CD4-positive, alpha-beta memory T cell (primary cell): ENCODE measurements at regions of chr5 and their contacts with region 1.

Region 1: DNA sequence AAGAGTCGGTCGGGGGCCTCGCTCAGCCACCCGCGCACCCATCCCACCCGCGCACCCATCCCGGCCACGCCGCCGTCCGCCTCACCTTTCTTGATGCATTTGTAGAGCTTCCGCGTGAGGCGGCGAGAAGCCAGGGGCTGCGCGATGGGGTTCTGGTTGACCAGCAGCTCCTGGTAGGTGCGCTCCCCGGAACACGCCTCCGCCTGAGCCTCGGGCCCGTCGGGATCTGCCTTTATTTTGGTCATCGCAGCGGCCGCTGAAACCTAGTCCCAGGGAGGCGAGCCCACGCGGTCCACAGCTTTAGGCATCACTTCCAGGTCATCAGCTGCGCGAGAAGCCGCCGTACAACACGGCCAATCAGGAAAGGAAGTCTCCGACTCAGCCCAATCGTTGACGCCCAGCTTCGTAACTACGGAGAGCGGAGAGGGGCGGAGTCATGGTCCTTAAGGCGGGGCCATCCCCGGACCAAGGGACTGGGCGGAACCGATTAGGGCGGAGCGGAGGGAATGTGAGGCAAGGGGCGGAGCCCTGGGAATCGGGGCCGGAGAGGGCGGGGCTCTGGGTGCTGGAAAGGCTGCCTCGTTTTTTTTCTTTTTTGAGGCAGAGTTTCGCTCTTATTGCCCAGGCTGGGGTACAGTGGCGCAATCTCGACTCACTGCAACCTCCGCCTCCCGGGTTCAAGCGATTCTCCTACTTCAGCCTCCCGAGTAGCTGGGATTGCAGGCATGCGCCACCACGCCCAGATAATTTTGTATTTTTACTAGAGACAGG is at the start of gene NHP2:
- DNase-seq: peak; percentile 96 to 98 (median 96)
- H3K4me3 ChIP-seq: peak within 1 kb of the TSS; percentile 65
- H3K4me3 Mint-ChIP-seq: peak within 1 kb of the TSS; percentile 92 to 98 (median 96)
- H3K27ac ChIP-seq: peak within 1 kb of the TSS; percentile 70
- H3K27ac Mint-ChIP-seq: peak within 1 kb of the TSS; percentile 87 to 96 (median 90)
- H3K4me1 ChIP-seq: peaks cover 34% of the 10 kb centered on the region
- H3K4me1 Mint-ChIP-seq: peaks cover 21 to 53% (median 30%) of the 10 kb centered on the region in 4 donors
- H3K27me3 ChIP-seq: no peaks in the 10 kb centered on the region
- H3K27me3 Mint-ChIP-seq: no peaks in the 10 kb centered on the region
- total RNA-seq, gene NHP2: 64.1 to 69.5 TPM

Region 2: DNA sequence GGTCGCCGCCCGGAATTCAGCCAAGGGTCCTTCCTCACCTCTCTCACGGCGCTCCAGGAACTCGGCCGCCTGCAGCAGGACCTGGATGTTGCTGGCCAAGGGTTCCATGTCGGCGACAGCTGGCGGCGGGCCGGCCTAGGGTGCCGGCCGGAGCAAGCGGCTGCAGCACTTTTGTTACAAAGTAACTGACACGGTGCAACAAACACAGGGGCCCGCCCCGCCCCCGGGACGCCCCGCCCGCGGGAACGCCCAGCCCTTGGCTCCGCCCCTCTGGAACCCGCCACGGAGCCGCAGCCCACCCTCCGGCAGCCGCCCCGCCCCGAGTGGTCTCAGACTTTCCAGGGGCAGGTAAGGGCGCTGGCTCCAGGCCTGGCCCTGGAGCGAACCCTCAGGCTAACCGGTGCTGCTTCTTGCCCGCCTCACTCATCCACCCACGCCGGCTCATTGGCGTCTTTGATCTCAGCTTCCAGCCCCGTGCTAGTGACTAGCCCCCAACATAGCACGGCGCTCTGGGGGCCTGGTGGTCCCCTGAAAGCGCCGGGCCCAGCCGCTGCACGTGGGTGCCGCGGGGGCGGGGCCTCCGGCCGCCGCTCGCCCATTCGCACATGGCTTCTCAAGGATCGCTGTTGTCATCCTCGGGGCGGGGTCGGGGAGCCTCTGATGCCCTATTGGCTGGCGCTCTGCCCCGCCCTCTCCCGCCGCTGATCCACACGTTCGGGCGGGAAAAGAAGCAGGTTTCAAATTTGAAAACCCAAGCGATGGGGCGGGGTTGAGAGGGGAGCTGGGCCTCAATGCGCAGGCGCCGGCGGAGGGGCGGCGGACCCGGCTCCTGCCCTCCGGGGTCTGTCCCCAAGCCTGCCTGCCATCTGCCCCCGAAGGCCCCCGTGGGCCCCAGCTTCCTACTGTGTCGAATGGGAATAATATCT is 841.8 kb before region 1 on chr5 and contains the start of gene MXD3:
- CTCF ChIA-PET with region 1: no interaction called
- POLR2A ChIA-PET with region 1: no interaction called
- intact Hi-C with region 1: loop called (anchors 2 kb)
- DNase-seq: peak; percentile 90 to 96 (median 93)
- H3K4me3 ChIP-seq: peak within 1 kb of the TSS; percentile 24 to 64
- H3K4me3 Mint-ChIP-seq: peak within 1 kb of the TSS; percentile 70 to 86 (median 80)
- H3K27ac ChIP-seq: peak within 1 kb of the TSS; percentile 49
- H3K27ac Mint-ChIP-seq: peak within 1 kb of the TSS; percentile 29 to 83 (median 75)
- H3K4me1 ChIP-seq: peaks cover 41% of the 10 kb centered on the region
- H3K4me1 Mint-ChIP-seq: peaks cover 17 to 49% (median 30%) of the 10 kb centered on the region in 4 donors
- H3K27me3 ChIP-seq: no peaks in the 10 kb centered on the region
- H3K27me3 Mint-ChIP-seq: no peaks in the 10 kb centered on the region
- total RNA-seq, gene MXD3: 17.3 TPM

Region 3: GRCh38 chr5:178075840-178076548 is 77.8 kb before region 1 on chr5:
- CTCF ChIA-PET with region 1: interaction called, 283 read pairs
- POLR2A ChIA-PET with region 1: no interaction called
- intact Hi-C with region 1: no loop called
- DNase-seq: peak; percentile 74 to 78 (median 76)
- H3K4me3 ChIP-seq: no peak overlapping the region
- H3K4me3 Mint-ChIP-seq: no peak overlapping the region
- H3K27ac ChIP-seq: no peak overlapping the region
- H3K27ac Mint-ChIP-seq: peak overlapping the region in 1 of 7 donors; percentile 3
- H3K4me1 ChIP-seq: peaks cover 5% of the 10 kb centered on the region
- H3K4me1 Mint-ChIP-seq: peaks cover 0 to 6% (median 2%) of the 10 kb centered on the region in 4 donors
- H3K27me3 ChIP-seq: peaks cover 3% of the 10 kb centered on the region
- H3K27me3 Mint-ChIP-seq: peaks cover 0 to 3% of the 10 kb centered on the region in 2 donors

Region 4: DNA sequence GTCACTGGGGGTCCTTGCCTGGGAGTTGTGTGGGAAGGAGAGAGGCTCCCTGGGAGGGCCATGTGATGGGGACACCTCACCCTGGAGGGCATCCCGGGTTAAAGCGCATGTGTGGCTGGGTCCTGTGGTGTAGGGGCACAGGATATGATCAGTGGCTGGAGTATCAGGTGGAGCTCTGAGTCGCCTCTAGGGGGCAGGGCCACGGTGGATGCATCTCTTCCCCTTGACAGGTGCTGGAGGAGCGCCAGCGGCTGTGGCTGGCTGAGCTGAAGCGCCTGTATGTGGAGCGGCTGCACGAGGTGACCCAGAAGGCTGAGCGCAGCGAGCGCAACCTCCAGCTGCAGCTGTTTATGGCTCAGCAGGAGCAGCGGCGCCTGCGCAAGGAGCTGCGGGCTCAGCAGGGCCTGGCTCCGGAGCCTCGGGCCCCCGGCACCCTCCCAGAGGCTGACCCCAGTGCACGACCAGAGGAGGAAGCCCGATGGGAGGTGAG is 32.8 kb before region 1 on chr5:
- CTCF ChIA-PET with region 1: interaction called, 14 read pairs
- POLR2A ChIA-PET with region 1: interaction called, 19 read pairs
- intact Hi-C with region 1: no loop called
- DNase-seq: peak; percentile 81 to 92 (median 87)
- H3K4me3 ChIP-seq: peak overlapping the region in 1 of 2 donors; percentile 47
- H3K4me3 Mint-ChIP-seq: peak overlapping the region in 5 of 8 donors; percentile 3 to 73 (median 32)
- H3K27ac ChIP-seq: no peak overlapping the region
- H3K27ac Mint-ChIP-seq: peak overlapping the region in 3 of 7 donors; percentile 11 to 78 (median 42)
- H3K4me1 ChIP-seq: peaks cover 42% of the 10 kb centered on the region
- H3K4me1 Mint-ChIP-seq: peaks cover 9 to 26% (median 19%) of the 10 kb centered on the region in 4 donors
- H3K27me3 ChIP-seq: no peaks in the 10 kb centered on the region
- H3K27me3 Mint-ChIP-seq: peaks cover 0 to 3% of the 10 kb centered on the region in 2 donors

Region 5: GRCh38 chr5:178163772-178164735 is 10.3 kb after region 1 on chr5:
- CTCF ChIA-PET with region 1: interaction called, 4 read pairs
- POLR2A ChIA-PET with region 1: interaction called, 3 read pairs
- intact Hi-C with region 1: loop called (anchors 1 kb)
- DNase-seq: peak; percentile 86 to 91 (median 88)
- H3K4me3 ChIP-seq: no peak overlapping the region
- H3K4me3 Mint-ChIP-seq: peak overlapping the region in 2 of 8 donors; percentile 22 to 65
- H3K27ac ChIP-seq: no peak overlapping the region
- H3K27ac Mint-ChIP-seq: peak overlapping the region in 3 of 7 donors; percentile 13 to 59 (median 53)
- H3K4me1 ChIP-seq: peaks cover 3% of the 10 kb centered on the region
- H3K4me1 Mint-ChIP-seq: peaks cover 1 to 10% (median 6%) of the 10 kb centered on the region in 4 donors
- H3K27me3 ChIP-seq: no peaks in the 10 kb centered on the region
- H3K27me3 Mint-ChIP-seq: peaks cover 8 to 20% of the 10 kb centered on the region in 2 donors